CD8-positive, alpha-beta T cell (primary cell): ENCODE measurements at regions of chr6 and their contacts with region 1.

Region 1: GRCh38 chr6:139161817-139162284 is 27.0 kb downstream of the HECA start:
- DNase-seq: peak in 8 of 9 experiments; percentile 48 to 85 (median 71)
- ATAC-seq: peak; percentile 60
- H3K4me3 ChIP-seq: peak overlapping the region in 1 of 2 experiments; percentile 1
- H3K4me3 Mint-ChIP-seq: peak overlapping the region; percentile 70
- H3K27ac ChIP-seq: peak overlapping the region; percentile 52 to 68
- H3K27ac Mint-ChIP-seq: peak overlapping the region; percentile 93
- H3K4me1 ChIP-seq: peaks cover 86% of the 10 kb centered on the region
- H3K4me1 Mint-ChIP-seq: peaks cover 92% of the 10 kb centered on the region
- H3K27me3 ChIP-seq: no peaks in the 10 kb centered on the region
- H3K27me3 Mint-ChIP-seq: no peaks in the 10 kb centered on the region
- CTCF ChIP-seq: no peak

Region 2: DNA sequence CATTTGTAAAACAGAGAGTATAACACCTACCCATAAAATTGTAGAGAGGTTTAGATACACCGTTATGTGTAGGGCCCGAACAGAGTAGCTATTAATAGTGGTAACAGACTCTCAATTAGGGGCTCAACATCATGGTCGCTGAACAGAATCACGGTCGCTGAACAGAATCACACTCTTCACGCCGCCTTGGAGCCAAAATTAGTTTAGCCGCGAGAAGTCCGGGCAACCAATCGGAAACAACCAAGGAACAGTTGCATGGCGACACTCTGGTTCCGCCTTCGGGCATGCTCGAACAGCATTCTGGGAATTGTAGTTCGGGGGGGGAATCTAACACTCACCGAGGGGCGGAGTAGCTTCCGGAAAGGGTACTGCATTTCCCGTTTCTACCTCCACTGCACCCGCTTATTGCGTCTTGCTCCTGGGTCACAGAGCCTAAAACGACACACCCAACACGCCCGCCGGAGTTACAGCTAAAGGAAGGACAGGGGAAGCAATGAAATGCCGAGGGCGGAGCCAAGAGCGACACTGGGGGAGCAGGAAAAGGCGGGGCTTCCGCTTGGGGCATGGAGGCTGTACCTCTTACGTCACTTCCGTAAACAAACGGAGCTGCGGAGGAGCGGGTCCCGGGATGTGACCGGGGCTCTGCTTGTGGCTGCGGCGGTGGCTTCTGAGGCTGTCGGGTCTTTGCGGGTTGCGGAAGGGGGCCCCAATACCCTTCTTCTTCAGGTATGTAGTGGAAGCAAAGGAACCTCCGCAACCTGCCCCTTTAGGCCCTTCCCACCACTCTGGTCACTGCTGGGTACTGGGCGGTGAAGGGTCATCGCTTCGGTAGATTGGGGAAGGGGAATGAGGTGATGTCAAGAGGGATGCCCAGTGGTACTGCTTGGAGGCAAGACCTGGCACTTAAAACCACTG is 388.4 kb before region 1 on chr6 and contains the start of gene CCDC28A:
- CTCF ChIA-PET with region 1: no interaction called
- POLR2A ChIA-PET with region 1: no interaction called
- intact Hi-C with region 1: loop called in 1 of 2 experiments (anchors 10 kb)
- DNase-seq: peak; percentile 87 to 97 (median 92)
- ATAC-seq: peak; percentile 84
- H3K4me3 ChIP-seq: peak within 1 kb of the TSS; percentile 68 to 90
- H3K4me3 Mint-ChIP-seq: peak within 1 kb of the TSS; percentile 100
- H3K27ac ChIP-seq: peak within 1 kb of the TSS; percentile 88 to 96
- H3K27ac Mint-ChIP-seq: peak within 1 kb of the TSS; percentile 100
- H3K4me1 ChIP-seq: peaks cover 19% of the 10 kb centered on the region
- H3K4me1 Mint-ChIP-seq: peaks cover 33% of the 10 kb centered on the region
- H3K27me3 ChIP-seq: no peaks in the 10 kb centered on the region
- H3K27me3 Mint-ChIP-seq: no peaks in the 10 kb centered on the region
- CTCF ChIP-seq: no peak
- total RNA-seq, gene CCDC28A: 38.2 to 39.4 TPM

Region 3: DNA sequence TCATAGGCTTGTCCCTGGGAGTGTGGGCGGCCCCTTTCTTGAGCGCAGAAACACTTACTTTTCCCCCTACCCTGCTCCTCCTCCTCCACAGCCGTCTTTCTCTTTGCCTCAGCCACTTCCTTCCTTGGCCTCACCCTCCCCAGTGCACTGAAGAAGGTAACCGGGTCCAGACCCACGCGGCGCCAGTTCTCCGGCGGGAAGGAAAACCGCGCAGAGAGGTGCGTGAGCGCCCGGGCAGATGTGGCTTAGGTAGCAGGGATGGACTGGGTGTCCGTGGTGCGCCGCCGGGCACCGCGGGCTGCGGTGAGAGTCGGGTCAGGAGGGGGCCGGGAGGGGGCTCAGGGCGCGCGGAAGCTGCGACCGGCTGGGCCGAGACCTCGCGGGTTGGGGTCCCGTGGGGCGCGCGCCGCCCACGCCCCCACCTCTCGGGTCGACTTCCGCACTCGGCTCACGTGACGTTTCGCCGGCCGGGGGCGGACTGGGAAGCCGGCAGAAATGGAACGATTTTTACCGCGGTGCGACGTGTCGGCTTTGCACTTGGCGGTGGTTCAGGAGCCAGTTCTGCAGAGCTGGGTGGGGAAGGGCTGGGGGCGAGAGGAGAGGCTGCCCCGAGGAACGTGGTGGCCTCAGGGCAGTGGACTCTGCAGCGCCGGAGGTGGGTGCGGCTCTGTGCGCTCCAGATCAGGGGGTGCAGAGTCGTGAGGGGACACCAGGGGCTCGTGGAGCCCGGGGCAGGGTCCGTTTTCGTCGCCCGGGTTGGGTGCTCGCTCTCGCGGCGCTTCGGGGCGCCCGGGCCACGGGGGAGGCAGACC is 133.0 kb before region 1 on chr6 and contains the start of gene ABRACL:
- CTCF ChIA-PET with region 1: no interaction called
- POLR2A ChIA-PET with region 1: interaction called, 3 read pairs
- intact Hi-C with region 1: loop called in 1 of 2 experiments (anchors 2 kb)
- DNase-seq: peak; percentile 38 to 89 (median 74)
- ATAC-seq: peak; percentile 88
- H3K4me3 ChIP-seq: peak within 1 kb of the TSS; percentile 93 to 99
- H3K4me3 Mint-ChIP-seq: no peak within 1 kb of the TSS
- H3K27ac ChIP-seq: peak within 1 kb of the TSS; percentile 86 to 90
- H3K27ac Mint-ChIP-seq: peak within 1 kb of the TSS; percentile 96
- H3K4me1 ChIP-seq: peaks cover 24% of the 10 kb centered on the region
- H3K4me1 Mint-ChIP-seq: peaks cover 31% of the 10 kb centered on the region
- H3K27me3 ChIP-seq: no peaks in the 10 kb centered on the region
- H3K27me3 Mint-ChIP-seq: no peaks in the 10 kb centered on the region
- CTCF ChIP-seq: no peak
- total RNA-seq, gene ABRACL: 30.4 to 30.5 TPM

Region 4: GRCh38 chr6:139109558-139109957 is 52.3 kb before region 1 on chr6:
- CTCF ChIA-PET with region 1: interaction called, 3 read pairs
- POLR2A ChIA-PET with region 1: interaction called, 6 read pairs
- intact Hi-C with region 1: loop called in 1 of 2 experiments (anchors 1 kb)
- DNase-seq: peak in 3 of 9 experiments; percentile 39 to 50 (median 42)
- ATAC-seq: no peak
- H3K4me3 ChIP-seq: no peak overlapping the region
- H3K4me3 Mint-ChIP-seq: no peak overlapping the region
- H3K27ac ChIP-seq: no peak overlapping the region
- H3K27ac Mint-ChIP-seq: peak overlapping the region; percentile 64
- H3K4me1 ChIP-seq: peaks cover 52% of the 10 kb centered on the region
- H3K4me1 Mint-ChIP-seq: peaks cover 73% of the 10 kb centered on the region
- H3K27me3 ChIP-seq: no peaks in the 10 kb centered on the region
- H3K27me3 Mint-ChIP-seq: no peaks in the 10 kb centered on the region
- CTCF ChIP-seq: peak; percentile 28

Region 5: DNA sequence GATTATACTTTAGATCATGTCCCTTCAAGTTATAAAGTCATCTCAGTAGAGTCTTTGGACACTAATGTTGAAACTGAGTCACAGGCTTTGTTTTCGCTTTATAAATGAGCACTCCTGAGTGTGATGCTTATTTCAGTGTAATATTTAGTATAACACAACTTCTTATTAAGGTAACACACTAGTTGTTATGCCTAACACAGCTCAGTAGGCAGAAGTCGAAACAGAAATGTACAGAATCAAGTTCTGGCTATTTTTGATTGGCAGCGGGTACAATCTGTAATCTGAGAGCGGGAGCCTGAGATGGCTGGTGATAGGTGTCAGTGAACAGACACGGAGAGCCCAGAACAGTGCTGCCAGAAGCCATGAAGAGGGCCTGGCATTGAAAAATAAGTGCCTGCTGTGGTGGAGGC is 15.5 kb before region 1 on chr6:
- CTCF ChIA-PET with region 1: interaction called, 4 read pairs
- POLR2A ChIA-PET with region 1: interaction called, 15 read pairs
- intact Hi-C with region 1: loop called in 1 of 2 experiments (anchors 2 kb)
- DNase-seq: no peak
- ATAC-seq: peak; percentile 21
- H3K4me3 ChIP-seq: peak overlapping the region in 1 of 2 experiments; percentile 11
- H3K4me3 Mint-ChIP-seq: peak overlapping the region; percentile 71
- H3K27ac ChIP-seq: peak overlapping the region in 1 of 2 experiments; percentile 57
- H3K27ac Mint-ChIP-seq: peak overlapping the region; percentile 62
- H3K4me1 ChIP-seq: peaks cover 89% of the 10 kb centered on the region
- H3K4me1 Mint-ChIP-seq: peaks cover 91% of the 10 kb centered on the region
- H3K27me3 ChIP-seq: no peaks in the 10 kb centered on the region
- H3K27me3 Mint-ChIP-seq: no peaks in the 10 kb centered on the region
- CTCF ChIP-seq: no peak

Region 6: GRCh38 chr6:139173172-139173571 is 11.3 kb after region 1 on chr6:
- CTCF ChIA-PET with region 1: interaction called, 7 read pairs
- POLR2A ChIA-PET with region 1: interaction called, 8 read pairs
- intact Hi-C with region 1: loop called in 1 of 2 experiments (anchors 1 kb)
- DNase-seq: peak in 4 of 9 experiments; percentile 32 to 74 (median 50)
- ATAC-seq: peak; percentile 84
- H3K4me3 ChIP-seq: no peak overlapping the region
- H3K4me3 Mint-ChIP-seq: peak overlapping the region; percentile 40
- H3K27ac ChIP-seq: peak overlapping the region in 1 of 2 experiments; percentile 34
- H3K27ac Mint-ChIP-seq: peak overlapping the region; percentile 80
- H3K4me1 ChIP-seq: peaks cover 92% of the 10 kb centered on the region
- H3K4me1 Mint-ChIP-seq: peaks cover 93% of the 10 kb centered on the region
- H3K27me3 ChIP-seq: no peaks in the 10 kb centered on the region
- H3K27me3 Mint-ChIP-seq: no peaks in the 10 kb centered on the region
- CTCF ChIP-seq: no peak

Region 7: GRCh38 chr6:139895205-139895793 is 733.4 kb after region 1 on chr6:
- CTCF ChIA-PET with region 1: no interaction called
- POLR2A ChIA-PET with region 1: no interaction called
- intact Hi-C with region 1: no loop called
- DNase-seq: peak in 1 of 9 experiments; percentile 5
- ATAC-seq: no peak
- H3K4me3 ChIP-seq: no peak overlapping the region
- H3K4me3 Mint-ChIP-seq: no peak overlapping the region
- H3K27ac ChIP-seq: no peak overlapping the region
- H3K27ac Mint-ChIP-seq: no peak overlapping the region
- H3K4me1 ChIP-seq: no peaks in the 10 kb centered on the region
- H3K4me1 Mint-ChIP-seq: no peaks in the 10 kb centered on the region
- H3K27me3 ChIP-seq: no peaks in the 10 kb centered on the region
- H3K27me3 Mint-ChIP-seq: peaks cover 10% of the 10 kb centered on the region
- CTCF ChIP-seq: no peak